Ascending aorta (tissue), 2 donors: ENCODE measurements at regions of chr19 and their contacts with region 1.

Region 1: DNA sequence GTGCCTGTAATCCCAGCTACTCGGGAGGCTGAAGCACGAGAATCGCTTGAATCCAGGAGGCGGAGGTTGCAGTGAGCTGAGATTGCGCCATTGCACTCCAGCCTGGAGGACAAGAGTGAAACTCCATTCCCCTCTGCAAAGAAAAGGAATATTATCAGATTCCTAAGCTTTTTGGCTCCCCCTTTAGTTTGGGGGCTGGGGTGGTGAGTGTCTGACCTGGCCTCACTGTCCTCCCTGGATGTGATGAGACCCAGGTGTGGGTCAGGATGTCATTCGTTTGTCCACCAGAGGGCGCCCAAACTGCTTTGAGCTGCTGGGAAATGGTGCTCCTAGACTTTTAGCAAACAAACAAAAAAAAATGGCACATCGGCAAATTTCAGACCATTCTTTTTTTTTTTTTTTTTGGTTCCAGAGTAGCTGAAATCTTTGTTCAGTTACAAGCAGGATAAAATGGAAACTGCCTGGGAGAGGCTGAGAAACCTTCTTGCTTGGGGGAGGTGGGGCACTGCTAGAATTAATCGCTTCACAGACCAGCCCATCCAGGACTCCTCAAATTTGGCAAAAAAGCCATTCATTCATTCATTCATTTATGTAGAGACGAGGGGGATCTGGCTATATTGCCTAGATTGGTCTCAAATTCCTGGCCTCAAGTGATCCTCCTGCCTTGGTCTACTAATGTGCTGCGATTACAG is 29.4 kb downstream of the SPC24 start:
- DNase-seq: peak; percentile 53 to 91
- H3K4me3 ChIP-seq: no peak overlapping the region
- H3K27ac ChIP-seq: peak overlapping the region in 1 of 2 donors; percentile 53
- H3K4me1 ChIP-seq: peaks cover 0 to 4% of the 10 kb centered on the region in 2 donors
- H3K27me3 ChIP-seq: no peaks in the 10 kb centered on the region
- CTCF ChIP-seq: peak; percentile 68 to 88 (median 78)

Region 2: DNA sequence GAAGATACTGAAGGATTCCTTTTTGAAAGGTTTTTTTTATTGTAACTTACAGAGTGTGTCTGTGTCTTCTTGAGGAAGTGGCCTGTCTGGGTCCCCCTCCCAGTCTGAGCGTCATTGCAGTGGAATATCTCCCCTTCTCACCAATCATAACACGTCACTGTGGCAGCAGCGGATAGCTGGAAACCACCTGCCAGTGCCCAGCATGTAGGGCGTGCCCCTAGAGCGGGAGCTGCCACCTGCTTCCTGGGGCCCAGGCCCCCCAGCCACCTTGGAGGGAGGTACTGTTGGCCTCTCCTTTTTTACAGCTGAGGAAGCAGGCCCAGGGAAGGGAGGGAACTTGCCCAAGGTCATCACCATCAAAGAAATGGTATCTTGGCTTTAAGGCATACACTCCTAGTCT is 412.8 kb before region 1 on chr19:
- intact Hi-C with region 1: no loop called
- DNase-seq: no peak
- H3K4me3 ChIP-seq: no peak overlapping the region
- H3K27ac ChIP-seq: no peak overlapping the region
- H3K4me1 ChIP-seq: peaks cover 0 to 5% of the 10 kb centered on the region in 2 donors
- H3K27me3 ChIP-seq: no peaks in the 10 kb centered on the region
- CTCF ChIP-seq: no peak

Region 3: GRCh38 chr19:10936661-10937084 is 189.5 kb before region 1 on chr19:
- intact Hi-C with region 1: loop called (anchors 5 kb)
- DNase-seq: no peak
- H3K4me3 ChIP-seq: peak overlapping the region in 1 of 2 donors; percentile 33
- H3K27ac ChIP-seq: no peak overlapping the region
- H3K4me1 ChIP-seq: no peaks in the 10 kb centered on the region
- H3K27me3 ChIP-seq: no peaks in the 10 kb centered on the region
- CTCF ChIP-seq: peak; percentile 59 to 73 (median 66)

Region 4: GRCh38 chr19:11035441-11036377 is 90.4 kb before region 1 on chr19:
- intact Hi-C with region 1: loop called (anchors 1 kb)
- DNase-seq: peak; percentile 70 to 96
- H3K4me3 ChIP-seq: no peak overlapping the region
- H3K27ac ChIP-seq: peak overlapping the region; percentile 2 to 54
- H3K4me1 ChIP-seq: peaks cover 4 to 5% of the 10 kb centered on the region in 2 donors
- H3K27me3 ChIP-seq: no peaks in the 10 kb centered on the region
- CTCF ChIP-seq: peak; percentile 81 to 94 (median 92)

Region 5: DNA sequence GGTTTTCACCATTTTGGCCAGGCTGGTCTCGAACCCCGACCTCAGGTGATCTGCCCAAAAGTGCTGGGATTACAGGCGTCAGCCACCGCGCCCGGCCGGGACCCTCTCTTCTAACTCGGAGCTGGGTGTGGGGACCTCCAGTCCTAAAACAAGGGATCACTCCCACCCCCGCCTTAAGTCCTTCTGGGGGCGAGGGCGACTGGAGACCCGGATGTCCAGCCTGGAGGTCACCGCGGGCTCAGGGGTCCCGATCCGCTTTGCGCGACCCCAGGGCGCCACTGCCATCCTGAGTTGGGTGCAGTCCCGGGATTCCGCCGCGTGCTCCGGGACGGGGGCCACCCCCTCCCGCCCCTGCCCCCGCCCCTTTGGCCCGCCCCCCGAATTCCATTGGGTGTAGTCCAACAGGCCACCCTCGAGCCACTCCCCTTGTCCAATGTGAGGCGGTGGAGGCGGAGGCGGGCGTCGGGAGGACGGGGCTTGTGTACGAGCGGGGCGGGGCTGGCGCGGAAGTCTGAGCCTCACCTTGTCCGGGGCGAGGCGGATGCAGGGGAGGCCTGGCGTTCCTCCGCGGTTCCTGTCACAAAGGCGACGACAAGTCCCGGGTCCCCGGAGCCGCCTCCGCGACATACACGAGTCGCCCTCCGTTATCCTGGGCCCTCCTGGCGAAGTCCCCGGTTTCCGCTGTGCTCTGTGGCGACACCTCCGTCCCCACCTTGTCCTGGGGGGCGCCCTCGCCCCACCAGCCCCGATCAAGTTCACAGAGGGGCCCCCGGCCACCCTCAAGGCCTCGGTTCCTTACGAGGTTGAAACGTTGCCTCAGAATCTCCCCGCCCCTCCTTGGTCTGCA is 35.9 kb before region 1 on chr19:
- intact Hi-C with region 1: loop called (anchors 2 kb)
- DNase-seq: peak; percentile 96 to 99
- H3K4me3 ChIP-seq: peak overlapping the region; percentile 45 to 82
- H3K27ac ChIP-seq: peak overlapping the region; percentile 98 to 99
- H3K4me1 ChIP-seq: peaks cover 15 to 45% of the 10 kb centered on the region in 2 donors
- H3K27me3 ChIP-seq: no peaks in the 10 kb centered on the region
- CTCF ChIP-seq: peak in 2 of 3 experiments; percentile 16